ENCODE measurements at regions of chr10 and their contacts with region 1.

Region 1: DNA sequence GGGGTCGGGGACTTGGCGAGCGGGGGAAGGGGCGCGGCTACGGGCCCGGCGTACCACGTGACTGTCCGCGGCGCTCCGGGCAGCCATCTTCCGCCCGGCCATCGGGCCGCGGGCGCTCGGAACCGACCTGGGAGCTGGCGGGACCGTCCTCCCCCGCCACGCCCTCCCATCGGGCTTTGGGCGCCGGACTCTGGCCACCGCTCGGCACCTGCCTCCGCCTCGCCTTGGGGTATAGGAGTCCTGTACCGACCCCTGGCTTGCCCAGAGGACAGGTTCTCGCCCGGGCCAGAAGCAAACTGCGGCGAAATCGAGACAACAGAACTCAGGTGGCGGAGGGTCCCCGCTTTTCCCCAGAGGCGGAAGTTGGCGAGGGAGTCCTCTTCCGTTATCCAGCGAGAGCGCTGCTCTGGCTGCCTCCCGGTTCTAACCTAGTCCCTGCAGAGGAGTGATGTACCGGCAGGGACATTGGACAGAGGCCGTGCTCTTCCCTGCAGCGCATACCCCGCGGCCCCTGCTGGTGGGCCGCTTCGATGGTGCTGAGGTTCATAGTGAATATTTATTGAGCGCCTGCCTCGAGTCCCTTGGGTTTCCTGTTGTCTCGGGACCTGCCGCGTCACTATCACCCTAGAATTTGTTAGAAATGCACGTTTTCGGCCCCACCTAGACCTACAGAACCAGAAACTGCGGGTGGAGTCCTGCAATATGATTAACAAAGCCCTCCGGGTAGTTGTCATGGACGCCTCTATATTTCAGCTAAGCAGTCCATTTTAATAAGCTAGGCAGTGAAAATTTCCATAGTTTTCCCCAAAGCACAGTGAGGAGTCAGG is 1.3 kb upstream of the SGMS1 start:
- DNase-seq: peak; percentile 70
- H3K4me3 Mint-ChIP-seq: peak overlapping the region; percentile 82
- H3K27ac Mint-ChIP-seq: peak overlapping the region; percentile 87
- H3K4me1 Mint-ChIP-seq: peaks cover 33% of the 10 kb centered on the region
- H3K27me3 Mint-ChIP-seq: peaks cover 1% of the 10 kb centered on the region

Region 2: GRCh38 chr10:49164559-49165188 is 1460.4 kb before region 1 on chr10:
- CTCF ChIA-PET with region 1: no interaction called
- POLR2A ChIA-PET with region 1: no interaction called
- intact Hi-C with region 1: no loop called
- DNase-seq: peak; percentile 60
- H3K4me3 Mint-ChIP-seq: no peak overlapping the region
- H3K27ac Mint-ChIP-seq: peak overlapping the region; percentile 14
- H3K4me1 Mint-ChIP-seq: peaks cover 41% of the 10 kb centered on the region
- H3K27me3 Mint-ChIP-seq: peaks cover 6% of the 10 kb centered on the region

Region 3: GRCh38 chr10:50396491-50397311 is 228.4 kb before region 1 on chr10:
- CTCF ChIA-PET with region 1: interaction called, 3 read pairs
- POLR2A ChIA-PET with region 1: interaction called, 5 read pairs
- intact Hi-C with region 1: loop called (anchors 2 kb)
- DNase-seq: peak; percentile 51
- H3K4me3 Mint-ChIP-seq: peak overlapping the region; percentile 17
- H3K27ac Mint-ChIP-seq: peak overlapping the region; percentile 65
- H3K4me1 Mint-ChIP-seq: peaks cover 46% of the 10 kb centered on the region
- H3K27me3 Mint-ChIP-seq: no peaks in the 10 kb centered on the region

Region 4: DNA sequence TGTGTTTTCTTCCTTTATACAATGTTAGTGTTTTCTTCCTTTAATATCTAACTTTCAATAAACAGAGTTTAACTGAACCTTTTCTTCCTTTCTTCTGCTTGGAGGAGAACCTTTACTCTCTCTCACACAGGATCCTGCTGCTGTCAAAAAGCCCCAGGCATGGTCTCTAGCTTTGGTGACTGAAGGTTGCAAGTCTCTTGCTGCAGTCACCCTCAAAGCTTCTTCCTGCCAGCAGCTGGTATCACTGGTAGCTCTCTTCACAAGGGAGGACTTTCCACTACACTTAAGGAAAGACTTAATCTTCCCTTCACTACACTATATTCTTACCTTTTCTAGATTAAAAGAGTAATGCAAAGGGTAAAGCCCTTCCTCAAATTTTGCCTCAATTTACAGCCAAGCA is 154.7 kb before region 1 on chr10:
- CTCF ChIA-PET with region 1: no interaction called
- POLR2A ChIA-PET with region 1: no interaction called
- intact Hi-C with region 1: no loop called
- DNase-seq: no peak
- H3K4me3 Mint-ChIP-seq: no peak overlapping the region
- H3K27ac Mint-ChIP-seq: no peak overlapping the region
- H3K4me1 Mint-ChIP-seq: peaks cover 50% of the 10 kb centered on the region
- H3K27me3 Mint-ChIP-seq: no peaks in the 10 kb centered on the region

Region 5: GRCh38 chr10:50508315-50509051 is 116.6 kb before region 1 on chr10:
- CTCF ChIA-PET with region 1: interaction called, 3 read pairs
- POLR2A ChIA-PET with region 1: interaction called, 13 read pairs
- intact Hi-C with region 1: loop called (anchors 1 kb)
- DNase-seq: peak; percentile 79
- H3K4me3 Mint-ChIP-seq: no peak overlapping the region
- H3K27ac Mint-ChIP-seq: no peak overlapping the region
- H3K4me1 Mint-ChIP-seq: peaks cover 68% of the 10 kb centered on the region
- H3K27me3 Mint-ChIP-seq: peaks cover 5% of the 10 kb centered on the region

Region 6: GRCh38 chr10:50561816-50562215 is 63.3 kb before region 1 on chr10:
- CTCF ChIA-PET with region 1: interaction called, 3 read pairs
- POLR2A ChIA-PET with region 1: no interaction called
- intact Hi-C with region 1: loop called (anchors 5 kb)
- DNase-seq: no peak
- H3K4me3 Mint-ChIP-seq: no peak overlapping the region
- H3K27ac Mint-ChIP-seq: no peak overlapping the region
- H3K4me1 Mint-ChIP-seq: peaks cover 8% of the 10 kb centered on the region
- H3K27me3 Mint-ChIP-seq: no peaks in the 10 kb centered on the region

Region 7: DNA sequence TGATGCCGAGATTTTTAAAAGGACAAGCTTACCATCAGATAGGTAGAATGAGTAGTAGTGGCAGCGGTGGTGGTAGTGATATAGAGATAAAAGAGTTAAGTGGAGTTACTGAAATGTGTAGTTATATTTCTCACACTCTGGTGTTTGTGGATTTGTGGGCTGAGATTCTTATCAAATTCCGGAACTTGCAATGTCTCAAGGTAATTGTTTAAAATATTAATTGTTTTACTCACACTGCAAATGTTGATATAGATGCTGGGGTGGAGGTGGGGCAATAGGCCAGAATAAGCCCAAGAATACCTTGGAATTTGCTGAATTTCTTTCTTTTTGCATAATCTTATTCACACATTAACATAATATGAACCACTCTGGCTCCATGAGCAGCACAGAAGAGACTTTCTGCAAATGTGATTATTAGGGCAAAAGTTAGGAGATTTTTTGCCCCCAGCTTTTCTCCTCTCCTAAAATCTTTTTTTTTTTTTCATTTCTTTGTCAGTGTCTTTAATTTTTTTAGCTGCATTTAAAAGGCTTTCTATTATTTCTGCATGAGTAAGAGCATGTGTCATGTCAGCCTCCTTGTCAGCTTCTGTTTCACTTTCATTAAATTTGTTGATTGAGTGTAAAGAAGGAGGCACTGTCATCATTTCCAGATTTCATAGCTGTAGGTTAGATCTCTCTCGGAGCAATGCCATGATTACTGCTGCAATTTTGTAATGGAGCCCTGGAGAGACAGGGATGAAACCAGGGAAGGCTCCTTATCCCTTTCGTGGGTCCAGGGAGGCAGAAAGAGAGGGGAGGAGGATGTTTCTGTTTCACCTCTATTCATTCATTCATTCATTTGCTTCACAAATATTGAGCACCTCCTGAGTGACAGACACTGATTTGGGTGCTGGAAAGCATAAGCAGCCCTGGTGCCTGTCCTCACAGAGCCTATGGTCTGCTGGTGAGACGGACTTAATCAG is 11.8 kb after region 1 on chr10:
- CTCF ChIA-PET with region 1: interaction called, 11 read pairs
- POLR2A ChIA-PET with region 1: interaction called, 7 read pairs
- intact Hi-C with region 1: loop called (anchors 1 kb)
- DNase-seq: peak; percentile 44
- H3K4me3 Mint-ChIP-seq: no peak overlapping the region
- H3K27ac Mint-ChIP-seq: peak overlapping the region; percentile 50
- H3K4me1 Mint-ChIP-seq: peaks cover 33% of the 10 kb centered on the region
- H3K27me3 Mint-ChIP-seq: peaks cover 34% of the 10 kb centered on the region

Region 8: GRCh38 chr10:51699475-51700227 is 1074.6 kb after region 1 on chr10 and contains the start of gene CSTF2T:
- CTCF ChIA-PET with region 1: no interaction called
- POLR2A ChIA-PET with region 1: no interaction called
- intact Hi-C with region 1: loop called (anchors 5 kb)
- DNase-seq: peak; percentile 94
- H3K4me3 Mint-ChIP-seq: peak within 1 kb of the TSS; percentile 95
- H3K27ac Mint-ChIP-seq: peak within 1 kb of the TSS; percentile 100
- H3K4me1 Mint-ChIP-seq: peaks cover 48% of the 10 kb centered on the region
- H3K27me3 Mint-ChIP-seq: no peaks in the 10 kb centered on the region
- total RNA-seq, gene CSTF2T: 26.4 TPM